ENCODE measurements at regions of chr7 and their contacts with region 1.

Region 1: GRCh38 chr7:66844552-66845378 is 76.3 kb upstream of the TMEM248 start:
- DNase-seq: peak; percentile 99
- ATAC-seq: peak; percentile 87
- H3K4me3 Mint-ChIP-seq: peak overlapping the region; percentile 98
- H3K27ac Mint-ChIP-seq: peak overlapping the region; percentile 99
- H3K4me1 Mint-ChIP-seq: peaks cover 29% of the 10 kb centered on the region
- H3K27me3 Mint-ChIP-seq: peaks cover 2% of the 10 kb centered on the region
- CTCF ChIP-seq: no peak

Region 2: DNA sequence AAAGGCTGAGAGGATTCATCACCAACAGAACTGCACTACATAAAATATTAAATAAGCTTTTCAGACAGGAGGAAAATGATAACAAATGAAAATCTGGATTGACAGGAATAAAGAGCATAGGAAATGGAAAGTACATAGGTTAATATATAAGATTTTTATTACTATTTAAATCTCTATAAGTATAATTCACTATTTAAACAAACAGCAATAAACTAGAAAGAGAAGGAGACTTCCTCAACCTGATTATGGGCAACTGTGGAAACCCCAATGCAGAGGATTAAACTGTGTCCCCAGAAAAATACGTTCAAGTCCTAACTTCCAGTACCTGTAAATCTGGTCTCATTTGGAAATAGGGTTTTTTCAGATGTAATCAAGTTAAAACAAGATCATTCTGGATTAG is 784.0 kb before region 1 on chr7:
- CTCF ChIA-PET with region 1: no interaction called
- POLR2A ChIA-PET with region 1: no interaction called
- intact Hi-C with region 1: no loop called
- DNase-seq: no peak
- ATAC-seq: no peak
- H3K4me3 Mint-ChIP-seq: no peak overlapping the region
- H3K27ac Mint-ChIP-seq: no peak overlapping the region
- H3K4me1 Mint-ChIP-seq: no peaks in the 10 kb centered on the region
- H3K27me3 Mint-ChIP-seq: no peaks in the 10 kb centered on the region
- CTCF ChIP-seq: no peak

Region 3: DNA sequence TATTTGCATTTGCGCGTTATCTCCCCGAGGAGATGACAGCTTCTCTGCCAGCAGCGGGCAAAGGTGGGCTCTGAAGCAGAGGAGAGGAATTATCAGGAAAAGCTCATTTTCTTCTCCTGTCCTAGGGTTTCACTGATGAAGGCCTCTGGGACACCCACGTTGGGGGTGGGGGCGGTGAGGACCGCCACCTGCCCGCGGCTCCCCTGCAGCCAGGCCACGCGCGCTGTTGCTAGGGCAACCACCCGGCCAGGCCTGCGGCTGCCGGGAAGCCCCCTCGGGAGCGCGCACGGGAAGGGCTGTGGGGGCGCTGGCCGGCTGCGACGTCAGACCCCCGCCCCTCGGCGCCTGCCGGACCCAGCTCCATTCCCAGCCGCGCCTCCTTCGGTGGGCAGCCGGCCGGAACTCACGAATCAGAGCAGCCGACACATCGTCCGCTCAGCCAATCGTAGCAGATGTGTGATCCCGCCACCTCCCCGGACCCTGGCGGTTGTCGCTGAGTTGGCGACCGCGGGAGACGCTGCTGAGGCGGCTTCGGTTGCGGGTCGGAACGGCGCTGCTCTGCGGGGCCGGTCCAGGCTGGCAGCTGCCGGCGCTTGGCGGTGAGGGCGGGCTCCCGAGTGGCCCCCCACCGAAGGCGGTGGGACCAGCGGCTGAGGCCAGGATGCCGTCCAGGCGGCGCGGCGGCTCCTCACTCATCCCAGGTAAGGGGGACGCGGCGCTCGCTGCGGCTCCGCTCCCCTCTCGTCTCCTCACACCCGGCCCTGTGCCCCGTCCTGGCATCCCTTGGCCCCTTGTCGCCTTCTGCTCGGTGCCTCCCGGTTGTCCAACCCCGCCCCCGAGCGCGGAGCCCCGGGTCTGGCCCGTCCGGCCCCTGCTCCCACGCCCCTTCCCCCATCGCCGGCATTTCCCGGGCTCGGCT is 639.7 kb before region 1 on chr7 and contains the start of gene TPST1:
- CTCF ChIA-PET with region 1: no interaction called
- POLR2A ChIA-PET with region 1: no interaction called
- intact Hi-C with region 1: loop called (anchors 10 kb)
- DNase-seq: peak; percentile 92
- ATAC-seq: peak; percentile 93
- H3K4me3 Mint-ChIP-seq: peak within 1 kb of the TSS; percentile 94
- H3K27ac Mint-ChIP-seq: peak within 1 kb of the TSS; percentile 85
- H3K4me1 Mint-ChIP-seq: peaks cover 43% of the 10 kb centered on the region
- H3K27me3 Mint-ChIP-seq: peaks cover 11% of the 10 kb centered on the region
- CTCF ChIP-seq: no peak
- total RNA-seq, gene TPST1: 5.6 and 6.5 TPM in 2 replicates

Region 4: GRCh38 chr7:66654123-66654732 is 190.5 kb before region 1 on chr7:
- CTCF ChIA-PET with region 1: no interaction called
- POLR2A ChIA-PET with region 1: interaction called, 14 read pairs
- intact Hi-C with region 1: loop called (anchors 1 kb)
- DNase-seq: peak; percentile 97
- ATAC-seq: peak; percentile 91
- H3K4me3 Mint-ChIP-seq: peak overlapping the region; percentile 94
- H3K27ac Mint-ChIP-seq: peak overlapping the region; percentile 96
- H3K4me1 Mint-ChIP-seq: peaks cover 30% of the 10 kb centered on the region
- H3K27me3 Mint-ChIP-seq: no peaks in the 10 kb centered on the region
- CTCF ChIP-seq: no peak

Region 5: GRCh38 chr7:66740302-66740979 is 104.3 kb before region 1 on chr7 and contains the start of gene RABGEF1:
- CTCF ChIA-PET with region 1: no interaction called
- POLR2A ChIA-PET with region 1: interaction called, 12 read pairs
- intact Hi-C with region 1: loop called (anchors 1 kb)
- DNase-seq: peak; percentile 96
- ATAC-seq: peak; percentile 84
- H3K4me3 Mint-ChIP-seq: peak within 1 kb of the TSS; percentile 93
- H3K27ac Mint-ChIP-seq: peak within 1 kb of the TSS; percentile 94
- H3K4me1 Mint-ChIP-seq: peaks cover 74% of the 10 kb centered on the region
- H3K27me3 Mint-ChIP-seq: no peaks in the 10 kb centered on the region
- CTCF ChIP-seq: no peak
- total RNA-seq, gene RABGEF1: 19.7 and 21.1 TPM in 2 replicates

Region 6: GRCh38 chr7:66894463-66895080 is 49.8 kb after region 1 on chr7:
- CTCF ChIA-PET with region 1: no interaction called
- POLR2A ChIA-PET with region 1: no interaction called
- intact Hi-C with region 1: no loop called
- DNase-seq: no peak
- ATAC-seq: no peak
- H3K4me3 Mint-ChIP-seq: no peak overlapping the region
- H3K27ac Mint-ChIP-seq: no peak overlapping the region
- H3K4me1 Mint-ChIP-seq: no peaks in the 10 kb centered on the region
- H3K27me3 Mint-ChIP-seq: no peaks in the 10 kb centered on the region
- CTCF ChIP-seq: no peak

Measured in activated B cell treated with CpG ODN at 0.5 μM for 24 hours (primary cell).